Activated T-helper 1 cell treated with anti-CD3 and anti-CD28 coated beads, Interleukin-12 subunit alpha, Interleukin-12 subunit beta, Interleukin-2, Interleukin-4 antibody, amounts not matched to agents 30 ng/mL and 10 ng/mL and 1 ng/mL, durations not matched to agents 14 hours and 24 hours and 36 hours (primary cell): ENCODE measurements at regions of chr15 and their contacts with region 1.

Region 1: GRCh38 chr15:95994418-95994817 is 336.1 kb upstream of the NR2F2 start:
- DNase-seq: no peak
- H3K4me3 Mint-ChIP-seq: no peak overlapping the region
- H3K27ac Mint-ChIP-seq: no peak overlapping the region
- H3K4me1 Mint-ChIP-seq: peaks cover 25% of the 10 kb centered on the region
- H3K27me3 Mint-ChIP-seq: peaks cover 26% of the 10 kb centered on the region

Region 2: DNA sequence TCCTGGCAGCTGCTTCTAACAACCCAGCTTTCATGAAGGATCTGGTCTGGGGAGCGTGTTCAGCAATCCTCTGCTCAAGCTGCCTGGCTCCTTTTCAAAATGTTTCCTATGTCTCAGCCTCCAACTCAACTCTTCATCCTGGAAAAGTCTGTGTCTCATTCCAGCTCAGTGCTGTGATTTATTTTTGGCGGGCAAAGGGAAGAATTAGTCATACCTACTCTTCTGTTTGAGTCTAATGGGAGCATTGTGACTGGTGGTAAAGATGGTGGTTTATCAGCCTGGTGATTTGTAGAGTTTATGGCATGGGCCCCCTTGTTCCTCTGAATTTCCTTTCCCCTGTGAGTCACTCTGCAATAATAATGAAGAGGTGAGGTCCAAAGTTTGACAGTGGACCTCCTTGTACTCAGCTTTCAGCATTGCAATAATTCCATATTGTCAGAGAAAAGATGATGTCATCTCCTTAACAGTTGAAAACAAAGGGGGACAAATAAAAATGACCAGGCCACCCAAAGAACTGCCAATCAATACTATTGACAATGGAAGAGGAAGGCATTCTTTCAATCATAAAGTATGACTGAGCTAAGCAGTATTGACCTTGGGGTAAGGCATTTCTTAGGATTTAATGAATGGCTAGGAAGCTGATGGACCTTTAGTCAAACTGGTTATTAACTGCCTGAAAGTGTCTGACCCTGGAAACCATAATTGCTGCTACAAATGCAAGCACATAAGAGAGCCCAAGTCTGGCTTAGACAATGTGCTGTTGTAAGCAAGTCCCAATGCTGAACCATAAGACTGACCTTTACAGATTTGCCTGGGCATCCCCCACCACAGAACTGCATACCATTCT is 1967.7 kb before region 1 on chr15:
- intact Hi-C with region 1: no loop called
- DNase-seq: no peak
- H3K4me3 Mint-ChIP-seq: no peak overlapping the region
- H3K27ac Mint-ChIP-seq: no peak overlapping the region
- H3K4me1 Mint-ChIP-seq: no peaks in the 10 kb centered on the region
- H3K27me3 Mint-ChIP-seq: peaks cover 11% of the 10 kb centered on the region

Region 3: DNA sequence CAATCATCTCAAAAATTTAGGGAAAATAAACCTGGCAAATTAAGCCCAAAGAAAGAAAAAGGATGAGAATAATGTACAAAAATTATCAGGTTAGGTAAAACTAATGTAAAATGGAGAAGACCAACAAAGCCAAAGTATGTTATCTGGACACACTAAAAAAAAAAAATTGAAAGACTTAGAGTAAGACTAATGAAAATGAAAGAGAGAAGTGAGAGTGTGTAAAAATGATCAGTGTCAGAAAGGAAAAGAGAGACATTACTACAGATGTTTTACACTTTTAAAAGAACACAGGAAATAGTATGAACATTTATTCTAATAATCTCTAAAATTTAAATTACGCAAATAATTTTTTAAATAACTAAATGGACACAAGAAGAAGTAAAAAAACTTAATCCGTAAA is 237.2 kb before region 1 on chr15:
- intact Hi-C with region 1: no loop called
- DNase-seq: no peak
- H3K4me3 Mint-ChIP-seq: no peak overlapping the region
- H3K27ac Mint-ChIP-seq: no peak overlapping the region
- H3K4me1 Mint-ChIP-seq: no peaks in the 10 kb centered on the region
- H3K27me3 Mint-ChIP-seq: peaks cover 10% of the 10 kb centered on the region

Region 4: GRCh38 chr15:96037584-96037983 is 43.2 kb after region 1 on chr15:
- intact Hi-C with region 1: loop called (anchors 5 kb)
- DNase-seq: no peak
- H3K4me3 Mint-ChIP-seq: no peak overlapping the region
- H3K27ac Mint-ChIP-seq: no peak overlapping the region
- H3K4me1 Mint-ChIP-seq: peaks cover 4% of the 10 kb centered on the region
- H3K27me3 Mint-ChIP-seq: peaks cover 46% of the 10 kb centered on the region